T-cell (primary cell): ENCODE measurements at regions of chr2 and their contacts with region 1.

Region 1: GRCh38 chr2:32386739-32387138 is 29.9 kb downstream of the BIRC6 start:
- DNase-seq: no peak
- ATAC-seq: no peak
- H3K4me3 ChIP-seq: no peak overlapping the region
- H3K4me3 Mint-ChIP-seq: no peak overlapping the region
- H3K27ac ChIP-seq: no peak overlapping the region
- H3K27ac Mint-ChIP-seq: no peak overlapping the region
- H3K4me1 ChIP-seq: no peaks in the 10 kb centered on the region
- H3K4me1 Mint-ChIP-seq: peaks cover 8 to 19% (median 14%) of the 10 kb centered on the region in 3 donors
- H3K27me3 ChIP-seq: no peaks in the 10 kb centered on the region
- H3K27me3 Mint-ChIP-seq: no peaks in the 10 kb centered on the region

Region 2: DNA sequence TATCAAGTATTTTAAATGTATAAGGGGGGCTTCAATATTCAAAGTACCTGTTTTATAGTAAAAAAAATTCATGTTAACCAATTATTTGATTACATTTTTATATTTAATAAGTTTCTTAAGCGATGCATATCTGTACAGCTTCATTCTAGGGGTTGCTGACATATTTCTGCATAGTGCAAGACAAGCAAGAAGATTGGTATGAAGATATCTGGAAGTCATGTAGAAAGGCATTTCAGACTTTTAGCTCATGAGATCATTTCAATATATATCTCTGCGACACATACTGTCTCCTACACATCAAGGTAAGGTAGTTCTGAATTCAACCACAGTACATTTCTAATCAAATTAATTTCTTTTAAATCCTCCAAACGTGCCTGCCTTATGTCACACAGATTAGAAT is 449.0 kb before region 1 on chr2:
- CTCF ChIA-PET with region 1: no interaction called
- POLR2A ChIA-PET with region 1: no interaction called
- DNase-seq: no peak
- ATAC-seq: no peak
- H3K4me3 ChIP-seq: no peak overlapping the region
- H3K4me3 Mint-ChIP-seq: no peak overlapping the region
- H3K27ac ChIP-seq: no peak overlapping the region
- H3K27ac Mint-ChIP-seq: no peak overlapping the region
- H3K4me1 ChIP-seq: peaks cover 0 to 11% of the 10 kb centered on the region in 2 experiments
- H3K4me1 Mint-ChIP-seq: peaks cover 3 to 14% (median 12%) of the 10 kb centered on the region in 3 donors
- H3K27me3 ChIP-seq: no peaks in the 10 kb centered on the region
- H3K27me3 Mint-ChIP-seq: no peaks in the 10 kb centered on the region

Region 3: GRCh38 chr2:32356735-32357644 is 29.7 kb before region 1 on chr2 and contains the start of gene BIRC6:
- CTCF ChIA-PET with region 1: no interaction called
- POLR2A ChIA-PET with region 1: interaction called in 1 of 2 experiments, 13 read pairs
- DNase-seq: peak; percentile 70 to 94 (median 80)
- ATAC-seq: peak; percentile 91 to 92 (median 91)
- H3K4me3 ChIP-seq: peak within 1 kb of the TSS; percentile 88 to 91
- H3K4me3 Mint-ChIP-seq: peak within 1 kb of the TSS; percentile 82 to 91 (median 88)
- H3K27ac ChIP-seq: peak within 1 kb of the TSS; percentile 89
- H3K27ac Mint-ChIP-seq: peak within 1 kb of the TSS; percentile 92
- H3K4me1 ChIP-seq: peaks cover 12 to 19% of the 10 kb centered on the region in 2 experiments
- H3K4me1 Mint-ChIP-seq: peaks cover 37 to 41% (median 40%) of the 10 kb centered on the region in 3 donors
- H3K27me3 ChIP-seq: no peaks in the 10 kb centered on the region
- H3K27me3 Mint-ChIP-seq: no peaks in the 10 kb centered on the region
- total RNA-seq, gene BIRC6: 106 to 179 (median 121) TPM